Panc1 (cell line): ENCODE measurements at regions of chr1 and their contacts with region 1.

Region 1: GRCh38 chr1:3423245-3423829 is 31.1 kb upstream of the ARHGEF16 start:
- DNase-seq: no peak
- ATAC-seq: no peak
- H3K4me3 ChIP-seq: no peak overlapping the region
- H3K27ac ChIP-seq: no peak overlapping the region
- H3K4me1 ChIP-seq: no peaks in the 10 kb centered on the region
- H3K27me3 ChIP-seq: no peaks in the 10 kb centered on the region
- CTCF ChIP-seq: no peak

Region 2: DNA sequence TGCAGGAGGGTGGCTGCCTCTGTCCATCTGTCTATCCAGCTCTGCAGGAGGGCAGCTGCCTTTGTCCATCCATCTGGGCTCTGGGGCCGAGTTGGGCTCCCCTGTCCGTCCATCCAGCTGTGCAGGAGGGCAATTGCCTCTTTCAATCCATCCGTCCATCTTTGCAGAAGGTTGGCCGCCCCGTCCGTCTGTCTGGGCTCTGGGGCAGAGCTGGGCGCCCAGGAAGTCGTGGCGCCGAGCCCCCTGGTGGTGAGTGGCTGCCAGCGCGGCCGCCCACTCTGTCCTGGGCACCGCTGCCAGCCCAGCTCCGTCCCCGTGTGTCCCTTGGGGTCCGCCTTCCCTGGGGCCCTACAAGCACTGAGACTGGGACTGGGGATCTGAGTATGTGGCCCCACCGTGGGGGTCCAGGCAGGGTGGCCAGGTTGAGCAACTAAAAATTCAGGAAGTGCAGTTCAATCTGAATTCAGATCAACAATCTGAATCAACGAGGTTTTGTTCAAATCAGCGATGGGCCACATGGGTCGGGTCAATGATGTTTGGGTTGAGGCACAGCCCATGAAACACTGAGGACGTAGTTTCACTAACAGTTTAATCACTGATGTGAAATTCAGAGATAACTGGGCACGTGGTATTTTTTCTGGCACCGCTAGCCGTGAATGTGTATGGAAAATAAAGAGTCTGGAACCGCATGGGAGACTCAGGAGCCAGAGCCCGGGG is 501.2 kb before region 1 on chr1:
- CTCF ChIA-PET with region 1: no interaction called
- POLR2A ChIA-PET with region 1: no interaction called
- in situ Hi-C with region 1: no loop called
- intact Hi-C with region 1: no loop called
- DNase-seq: no peak
- ATAC-seq: peak; percentile 91
- H3K4me3 ChIP-seq: no peak overlapping the region
- H3K27ac ChIP-seq: no peak overlapping the region
- H3K4me1 ChIP-seq: no peaks in the 10 kb centered on the region
- H3K27me3 ChIP-seq: peaks cover 3% of the 10 kb centered on the region; the same call in 1 of the 2 replicates
- CTCF ChIP-seq: peak; percentile 93

Region 3: GRCh38 chr1:3012456-3013291 is 410.7 kb before region 1 on chr1:
- CTCF ChIA-PET with region 1: interaction called, 3 read pairs
- POLR2A ChIA-PET with region 1: no interaction called
- in situ Hi-C with region 1: no loop called
- intact Hi-C with region 1: loop called (anchors 5 kb)
- DNase-seq: no peak
- ATAC-seq: peak; percentile 81
- H3K4me3 ChIP-seq: no peak overlapping the region
- H3K27ac ChIP-seq: no peak overlapping the region
- H3K4me1 ChIP-seq: no peaks in the 10 kb centered on the region
- H3K27me3 ChIP-seq: no peaks in the 10 kb centered on the region
- CTCF ChIP-seq: peak; percentile 95